Activated CD4-positive, alpha-beta memory T cell treated with anti-CD3 and anti-CD28 coated beads, Interleukin-2, amount 10 ng/mL, durations not matched to agents 7 days and 5 days (primary cell): ENCODE measurements at regions of chr1 and their contacts with region 1.

Region 1: GRCh38 chr1:209747580-209748262 is 8.1 kb upstream of the TRAF3IP3 start:
- DNase-seq: peak; percentile 92
- H3K4me3 Mint-ChIP-seq: peak overlapping the region; percentile 68
- H3K27ac Mint-ChIP-seq: peak overlapping the region; percentile 91
- H3K4me1 Mint-ChIP-seq: peaks cover 70% of the 10 kb centered on the region
- H3K27me3 Mint-ChIP-seq: no peaks in the 10 kb centered on the region

Region 2: GRCh38 chr1:209565759-209566678 is 181.7 kb before region 1 on chr1:
- CTCF ChIA-PET with region 1: interaction called, 31 read pairs
- POLR2A ChIA-PET with region 1: interaction called, 4 read pairs
- DNase-seq: peak; percentile 79
- H3K4me3 Mint-ChIP-seq: no peak overlapping the region
- H3K27ac Mint-ChIP-seq: no peak overlapping the region
- H3K4me1 Mint-ChIP-seq: peaks cover 9% of the 10 kb centered on the region
- H3K27me3 Mint-ChIP-seq: peaks cover 21% of the 10 kb centered on the region

Region 3: GRCh38 chr1:209601809-209602657 is 145.7 kb before region 1 on chr1:
- CTCF ChIA-PET with region 1: interaction called, 14 read pairs
- POLR2A ChIA-PET with region 1: no interaction called
- DNase-seq: peak; percentile 57
- H3K4me3 Mint-ChIP-seq: no peak overlapping the region
- H3K27ac Mint-ChIP-seq: no peak overlapping the region
- H3K4me1 Mint-ChIP-seq: peaks cover 10% of the 10 kb centered on the region
- H3K27me3 Mint-ChIP-seq: peaks cover 23% of the 10 kb centered on the region

Region 4: DNA sequence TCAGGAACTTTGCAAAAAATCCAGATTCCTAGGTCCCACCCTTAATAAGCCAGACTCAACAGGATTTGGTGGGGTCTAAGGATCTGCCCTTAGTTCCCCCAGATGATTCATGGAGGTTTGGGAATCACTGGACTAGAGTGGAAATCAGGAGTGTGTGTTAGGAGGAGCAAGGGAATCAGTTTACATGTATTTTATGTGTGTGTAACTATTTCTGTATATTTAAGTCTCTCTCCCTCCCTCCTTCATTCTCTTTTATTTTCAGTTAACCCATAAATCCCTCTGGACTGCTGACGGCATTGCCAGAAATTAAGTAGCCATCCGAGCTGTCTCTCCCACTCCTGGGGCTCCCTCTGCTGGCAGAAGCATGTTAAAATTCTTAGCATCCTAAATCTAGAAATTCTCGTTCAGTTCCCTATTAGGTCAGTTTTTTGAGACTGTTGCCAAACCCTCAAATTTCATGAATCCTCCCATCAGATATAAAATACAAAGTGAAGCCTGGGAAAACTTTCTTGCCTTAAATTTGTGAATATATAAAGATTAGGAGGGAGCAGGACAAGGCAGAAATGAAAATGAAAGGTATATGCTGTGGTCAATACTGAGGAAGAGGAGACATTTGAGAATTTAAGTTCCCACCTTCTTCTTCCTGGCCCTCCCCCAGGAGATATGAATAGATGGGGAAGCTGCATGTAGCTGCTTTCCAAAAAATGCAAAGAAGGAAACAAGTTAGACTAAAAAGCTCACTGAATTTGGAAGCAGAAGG is 54.8 kb before region 1 on chr1:
- CTCF ChIA-PET with region 1: interaction called, 16 read pairs
- POLR2A ChIA-PET with region 1: no interaction called
- DNase-seq: peak; percentile 81
- H3K4me3 Mint-ChIP-seq: no peak overlapping the region
- H3K27ac Mint-ChIP-seq: no peak overlapping the region
- H3K4me1 Mint-ChIP-seq: peaks cover 46% of the 10 kb centered on the region
- H3K27me3 Mint-ChIP-seq: no peaks in the 10 kb centered on the region

Region 5: GRCh38 chr1:209723756-209724693 is 23.7 kb before region 1 on chr1:
- CTCF ChIA-PET with region 1: interaction called, 10 read pairs
- POLR2A ChIA-PET with region 1: interaction called, 4 read pairs
- DNase-seq: no peak
- H3K4me3 Mint-ChIP-seq: no peak overlapping the region
- H3K27ac Mint-ChIP-seq: peak overlapping the region; percentile 79
- H3K4me1 Mint-ChIP-seq: peaks cover 28% of the 10 kb centered on the region
- H3K27me3 Mint-ChIP-seq: no peaks in the 10 kb centered on the region

Region 6: GRCh38 chr1:209805875-209806760 is 58.4 kb after region 1 on chr1 and contains the start of gene IRF6:
- CTCF ChIA-PET with region 1: no interaction called
- POLR2A ChIA-PET with region 1: no interaction called
- DNase-seq: peak; percentile 70
- H3K4me3 Mint-ChIP-seq: peak within 1 kb of the TSS; percentile 75
- H3K27ac Mint-ChIP-seq: peak within 1 kb of the TSS; percentile 45
- H3K4me1 Mint-ChIP-seq: peaks cover 13% of the 10 kb centered on the region
- H3K27me3 Mint-ChIP-seq: peaks cover 25% of the 10 kb centered on the region
- total RNA-seq, gene IRF6: 0.10 to 0.25 TPM

Region 7: DNA sequence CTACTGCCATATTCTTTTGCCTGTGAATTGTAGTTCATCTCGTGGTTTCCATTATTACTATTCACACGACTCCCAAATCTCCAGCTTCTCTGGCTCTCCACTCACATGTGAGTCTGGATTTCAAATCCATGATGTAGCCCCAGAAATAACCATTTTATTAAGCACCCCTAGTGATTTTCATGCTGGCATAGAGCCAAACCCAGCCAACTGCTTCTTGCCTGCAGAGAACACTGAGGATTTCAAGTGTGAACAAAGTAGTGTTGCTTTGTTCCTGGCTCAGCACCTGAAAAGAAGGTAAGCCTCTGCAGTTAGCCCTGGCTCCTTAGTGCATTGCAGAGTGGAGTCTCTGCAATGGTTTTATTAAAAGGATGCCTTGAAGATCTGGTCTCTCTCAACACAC is 106.0 kb after region 1 on chr1:
- CTCF ChIA-PET with region 1: no interaction called
- POLR2A ChIA-PET with region 1: no interaction called
- DNase-seq: no peak
- H3K4me3 Mint-ChIP-seq: no peak overlapping the region
- H3K27ac Mint-ChIP-seq: no peak overlapping the region
- H3K4me1 Mint-ChIP-seq: peaks cover 2% of the 10 kb centered on the region
- H3K27me3 Mint-ChIP-seq: no peaks in the 10 kb centered on the region